ENCODE measurements at regions of chr20 and their contacts with region 1.

Region 1: GRCh38 chr20:44388466-44389023 is 33.0 kb downstream of the HNF4A start:
- DNase-seq: peak; percentile 62
- H3K4me3 Mint-ChIP-seq: no peak overlapping the region
- H3K27ac Mint-ChIP-seq: no peak overlapping the region
- H3K4me1 Mint-ChIP-seq: peaks cover 5% of the 10 kb centered on the region
- H3K27me3 Mint-ChIP-seq: peaks cover 11% of the 10 kb centered on the region

Region 2: DNA sequence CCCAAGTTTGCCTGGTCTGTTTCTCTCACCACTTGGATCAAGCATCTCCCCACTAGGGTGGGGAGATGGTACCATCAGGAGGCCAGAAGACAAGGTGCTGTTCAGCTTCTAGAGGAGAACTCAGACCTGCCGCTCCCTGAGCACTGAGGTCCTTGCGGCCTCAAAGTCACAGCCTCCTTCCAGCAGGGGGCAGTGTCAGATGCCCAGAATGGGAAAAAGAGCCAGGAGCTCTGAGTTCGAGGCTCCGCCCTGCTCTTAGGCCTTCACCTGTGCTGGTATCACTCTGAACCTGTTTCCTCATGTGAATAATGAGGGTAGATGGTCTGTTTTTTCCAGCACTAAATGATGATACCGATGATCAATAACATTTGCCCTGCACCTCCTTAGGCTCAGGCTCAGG is 405.2 kb before region 1 on chr20:
- intact Hi-C with region 1: no loop called
- DNase-seq: no peak
- H3K4me3 Mint-ChIP-seq: no peak overlapping the region
- H3K27ac Mint-ChIP-seq: no peak overlapping the region
- H3K4me1 Mint-ChIP-seq: peaks cover 26% of the 10 kb centered on the region
- H3K27me3 Mint-ChIP-seq: peaks cover 17% of the 10 kb centered on the region

Region 3: DNA sequence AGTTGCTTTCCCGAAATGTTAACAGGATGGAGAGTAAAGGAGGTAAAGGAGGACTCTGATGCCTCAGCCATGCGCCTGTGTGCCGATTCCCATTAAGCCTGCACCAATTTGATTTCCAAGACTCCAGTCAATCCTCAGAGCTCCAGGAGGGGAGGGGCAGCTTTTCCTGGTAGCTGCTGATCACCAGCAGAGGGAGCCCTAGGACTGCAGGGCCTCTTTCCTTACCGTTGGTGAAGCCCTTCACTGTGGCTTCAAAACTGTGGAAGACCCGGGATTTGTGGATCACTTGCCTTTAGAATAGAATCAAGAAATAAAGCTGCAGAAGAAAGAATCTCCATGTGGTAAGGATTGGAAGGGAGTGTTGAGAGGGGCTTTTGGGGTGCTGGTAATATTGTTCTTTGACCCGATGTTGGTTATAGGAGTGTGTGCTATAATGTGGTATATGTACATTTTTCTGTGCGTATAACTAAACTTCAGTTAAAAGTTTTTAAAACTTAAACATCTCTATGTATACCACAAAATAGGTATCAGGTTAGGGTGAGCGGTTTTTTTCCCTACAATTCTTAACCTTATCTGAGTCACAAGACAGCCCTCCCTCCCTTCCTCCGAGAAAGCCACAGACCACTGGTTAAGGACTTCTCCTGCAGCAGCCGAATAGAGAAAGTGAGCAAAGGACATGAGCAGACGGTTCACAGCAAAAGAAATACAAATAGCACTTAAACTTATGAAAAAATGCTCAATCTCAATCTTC is 171.0 kb before region 1 on chr20:
- intact Hi-C with region 1: loop called (anchors 1 kb)
- DNase-seq: peak; percentile 58
- H3K4me3 Mint-ChIP-seq: peak overlapping the region; percentile 81
- H3K27ac Mint-ChIP-seq: peak overlapping the region; percentile 72
- H3K4me1 Mint-ChIP-seq: peaks cover 45% of the 10 kb centered on the region
- H3K27me3 Mint-ChIP-seq: no peaks in the 10 kb centered on the region

Region 4: DNA sequence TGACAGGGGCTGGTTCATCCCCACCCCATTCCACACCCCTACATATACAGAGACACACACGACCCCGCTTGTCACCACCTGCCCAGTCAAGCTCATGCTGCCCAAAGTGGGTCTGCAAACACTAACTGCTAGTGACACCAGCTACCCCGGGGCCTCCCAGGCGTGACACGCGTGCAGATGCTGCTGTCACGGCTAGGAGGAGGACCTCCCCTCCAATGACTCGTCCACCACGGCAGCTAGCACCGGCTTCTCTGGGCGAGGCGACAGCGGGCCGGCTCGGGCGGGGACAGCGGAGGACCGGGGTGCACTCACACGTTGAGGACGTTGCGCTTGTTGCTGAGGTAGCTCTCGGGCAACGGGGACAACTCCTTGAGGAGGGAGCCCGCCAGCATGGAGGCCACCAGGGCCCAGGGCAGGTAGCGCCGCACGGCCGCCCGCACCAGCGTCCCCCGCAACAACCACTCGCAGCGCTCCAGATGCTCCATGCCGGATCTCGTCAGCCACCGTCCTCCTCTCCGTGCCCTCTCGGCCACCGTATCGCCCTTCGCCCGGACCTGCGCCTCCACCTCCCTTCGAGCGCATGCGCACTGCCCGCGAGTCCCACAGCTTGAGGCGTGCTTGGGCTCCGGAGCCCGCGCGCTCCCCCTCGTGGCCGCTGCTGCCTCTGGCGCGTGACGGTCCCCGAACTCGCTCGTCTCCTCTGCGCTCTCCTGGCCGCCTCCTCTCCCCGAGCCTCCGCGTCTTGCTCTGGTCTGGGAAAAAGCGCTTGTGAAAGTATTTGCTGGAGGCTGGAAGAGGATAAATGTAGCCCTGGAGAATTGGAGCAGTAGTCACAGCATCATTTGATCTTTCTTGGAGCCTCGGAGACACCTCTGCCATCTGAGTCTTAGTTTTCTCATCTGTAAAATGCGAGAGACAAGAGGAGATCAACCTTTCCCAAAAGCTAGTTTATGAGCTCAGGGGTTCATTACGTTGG is 77.6 kb before region 1 on chr20 and contains the start of gene FITM2:
- intact Hi-C with region 1: loop called (anchors 2 kb)
- DNase-seq: peak; percentile 97
- H3K4me3 Mint-ChIP-seq: peak within 1 kb of the TSS; percentile 87
- H3K27ac Mint-ChIP-seq: peak within 1 kb of the TSS; percentile 84
- H3K4me1 Mint-ChIP-seq: peaks cover 14% of the 10 kb centered on the region
- H3K27me3 Mint-ChIP-seq: no peaks in the 10 kb centered on the region
- total RNA-seq, gene FITM2: 2.4 and 2.5 TPM in 2 replicates

Region 5: GRCh38 chr20:44475694-44476560 is 87.4 kb after region 1 on chr20 and contains the start of gene TTPAL:
- intact Hi-C with region 1: loop called (anchors 10 kb)
- DNase-seq: peak; percentile 86
- H3K4me3 Mint-ChIP-seq: peak within 1 kb of the TSS; percentile 95
- H3K27ac Mint-ChIP-seq: peak within 1 kb of the TSS; percentile 94
- H3K4me1 Mint-ChIP-seq: peaks cover 17% of the 10 kb centered on the region
- H3K27me3 Mint-ChIP-seq: no peaks in the 10 kb centered on the region
- total RNA-seq, gene TTPAL: 19.7 and 20.8 TPM in 2 replicates

Region 6: DNA sequence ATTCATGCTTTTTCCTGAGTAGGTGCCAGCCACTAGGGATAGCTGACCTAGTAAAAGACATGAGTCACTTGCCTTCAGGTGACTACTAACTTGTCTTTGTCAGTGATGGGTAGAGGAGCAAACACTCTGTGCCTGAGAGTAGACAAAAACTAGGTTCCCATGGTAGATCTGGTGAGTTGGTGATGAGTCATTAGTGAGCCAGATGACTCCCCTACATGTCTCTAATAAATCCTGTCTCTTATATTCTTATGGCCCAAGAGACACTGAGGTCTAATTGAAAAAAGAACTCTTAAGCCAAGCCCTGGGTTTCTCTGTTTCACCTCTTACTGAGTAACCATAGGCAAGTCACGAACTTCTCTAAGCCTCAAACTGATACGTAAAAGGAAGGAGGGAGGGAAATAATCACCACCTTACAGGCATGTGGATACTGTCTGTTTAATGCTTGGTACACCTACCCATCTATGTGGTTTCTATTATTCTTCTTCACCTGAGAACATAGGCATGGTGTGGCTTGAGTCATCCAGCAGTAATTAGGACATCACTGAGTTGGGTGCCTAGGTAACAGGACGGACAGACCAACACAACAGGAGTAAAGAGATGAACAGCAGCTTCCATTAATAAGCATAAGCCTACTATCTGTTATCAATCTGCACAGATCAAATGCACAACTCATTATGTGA is 107.4 kb after region 1 on chr20:
- intact Hi-C with region 1: no loop called
- DNase-seq: no peak
- H3K4me3 Mint-ChIP-seq: no peak overlapping the region
- H3K27ac Mint-ChIP-seq: peak overlapping the region; percentile 50
- H3K4me1 Mint-ChIP-seq: peaks cover 27% of the 10 kb centered on the region
- H3K27me3 Mint-ChIP-seq: no peaks in the 10 kb centered on the region

Region 7: GRCh38 chr20:44609511-44610312 is 221.2 kb after region 1 on chr20:
- intact Hi-C with region 1: loop called (anchors 1 kb)
- DNase-seq: peak; percentile 71
- H3K4me3 Mint-ChIP-seq: no peak overlapping the region
- H3K27ac Mint-ChIP-seq: peak overlapping the region; percentile 72
- H3K4me1 Mint-ChIP-seq: peaks cover 9% of the 10 kb centered on the region
- H3K27me3 Mint-ChIP-seq: no peaks in the 10 kb centered on the region

Region 8: GRCh38 chr20:44733341-44734069 is 345.0 kb after region 1 on chr20:
- intact Hi-C with region 1: loop called (anchors 10 kb)
- DNase-seq: peak; percentile 49
- H3K4me3 Mint-ChIP-seq: no peak overlapping the region
- H3K27ac Mint-ChIP-seq: no peak overlapping the region
- H3K4me1 Mint-ChIP-seq: peaks cover 20% of the 10 kb centered on the region
- H3K27me3 Mint-ChIP-seq: no peaks in the 10 kb centered on the region

Region 9: GRCh38 chr20:44790638-44791393 is 402.3 kb after region 1 on chr20:
- intact Hi-C with region 1: no loop called
- DNase-seq: no peak
- H3K4me3 Mint-ChIP-seq: no peak overlapping the region
- H3K27ac Mint-ChIP-seq: no peak overlapping the region
- H3K4me1 Mint-ChIP-seq: no peaks in the 10 kb centered on the region
- H3K27me3 Mint-ChIP-seq: no peaks in the 10 kb centered on the region

Measured in activated T-helper 2 cell treated with anti-CD3 and anti-CD28 coated beads, Interferon-gamma antibody, Interleukin-2, Interleukin-4, amounts not matched to agents 10 μg/mL and 5 μg/mL and 100 μg/mL, durations not matched to agents 14 hours and 24 hours and 36 hours (primary cell).